Calu3 (cell line): ENCODE measurements at regions of chr3 and their contacts with region 1.

Region 1: GRCh38 chr3:128617557-128618397 is 32.8 kb downstream of the RPN1 start:
- DNase-seq: peak; percentile 99
- H3K4me3 Mint-ChIP-seq: peak overlapping the region; percentile 86
- H3K27ac Mint-ChIP-seq: peak overlapping the region; percentile 62
- H3K4me1 Mint-ChIP-seq: peaks cover 28% of the 10 kb centered on the region
- H3K27me3 Mint-ChIP-seq: no peaks in the 10 kb centered on the region
- CTCF ChIP-seq: peak; percentile 88

Region 2: GRCh38 chr3:128590948-128591347 is 26.8 kb before region 1 on chr3:
- CTCF ChIA-PET with region 1: no interaction called
- intact Hi-C with region 1: no loop called
- DNase-seq: no peak
- H3K4me3 Mint-ChIP-seq: no peak overlapping the region
- H3K27ac Mint-ChIP-seq: no peak overlapping the region
- H3K4me1 Mint-ChIP-seq: peaks cover 9% of the 10 kb centered on the region
- H3K27me3 Mint-ChIP-seq: peaks cover 43% of the 10 kb centered on the region
- CTCF ChIP-seq: peak; percentile 24

Region 3: GRCh38 chr3:128650096-128651050 is 32.6 kb after region 1 on chr3 and contains the start of gene RPN1:
- CTCF ChIA-PET with region 1: interaction called, 7 read pairs
- intact Hi-C with region 1: loop called (anchors 2 kb)
- DNase-seq: peak; percentile 99
- H3K4me3 Mint-ChIP-seq: peak within 1 kb of the TSS; percentile 99
- H3K27ac Mint-ChIP-seq: peak within 1 kb of the TSS; percentile 98
- H3K4me1 Mint-ChIP-seq: peaks cover 10% of the 10 kb centered on the region
- H3K27me3 Mint-ChIP-seq: no peaks in the 10 kb centered on the region
- CTCF ChIP-seq: no peak
- total RNA-seq, gene RPN1: 449 and 474 TPM in 2 replicates